Naive thymus-derived CD8-positive, alpha-beta T cell (primary cell): ENCODE measurements at regions of chr19 and their contacts with region 1.

Region 1: DNA sequence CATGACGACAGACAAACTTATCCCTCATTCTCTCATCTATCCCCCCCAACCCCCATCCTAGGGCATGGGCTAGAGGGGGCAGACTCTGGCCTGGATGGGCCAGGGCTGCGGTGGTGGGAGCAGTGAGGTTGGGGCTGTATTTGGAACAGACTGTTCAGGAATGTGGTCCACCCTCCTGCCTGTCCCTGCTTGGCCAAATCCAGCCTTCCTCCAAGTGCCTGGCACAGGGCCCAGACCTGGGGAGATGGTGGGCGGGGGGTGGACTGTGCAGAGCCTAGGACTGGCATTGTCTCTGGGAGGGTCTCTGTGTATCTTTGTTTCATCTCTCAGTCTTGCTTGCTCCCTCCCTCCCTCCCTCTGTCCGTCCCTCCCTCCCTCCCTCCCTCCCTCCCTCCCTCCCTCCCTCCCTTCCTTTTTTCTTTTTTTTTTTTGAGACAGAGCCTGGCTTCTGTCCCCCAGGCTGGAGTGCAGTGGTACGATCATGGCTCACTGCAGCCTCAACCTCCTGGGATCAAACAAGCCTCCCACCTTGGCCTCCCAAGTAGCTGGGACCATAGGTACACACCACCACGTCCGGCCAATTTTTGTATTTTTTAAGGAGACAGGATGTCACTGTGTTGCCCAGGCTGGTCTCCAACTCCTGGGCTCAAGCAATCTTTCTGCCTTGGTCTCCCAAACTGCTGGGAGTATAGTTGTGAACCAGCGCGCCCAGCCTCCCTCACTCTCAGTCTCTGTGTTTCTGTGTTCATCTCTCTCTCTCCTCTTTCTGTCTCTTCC is 14.4 kb downstream of the EGLN2 start:
- DNase-seq: peak in 1 of 10 donors; percentile 49
- ATAC-seq: no peak
- H3K4me3 Mint-ChIP-seq: peak overlapping the region; percentile 1 to 96 (median 92)
- H3K27ac Mint-ChIP-seq: peak overlapping the region in 5 of 10 donors; percentile 54 to 94 (median 77)
- H3K4me1 Mint-ChIP-seq: peaks cover 30 to 52% (median 45%) of the 10 kb centered on the region in 4 donors
- H3K27me3 Mint-ChIP-seq: no peaks in the 10 kb centered on the region

Region 2: DNA sequence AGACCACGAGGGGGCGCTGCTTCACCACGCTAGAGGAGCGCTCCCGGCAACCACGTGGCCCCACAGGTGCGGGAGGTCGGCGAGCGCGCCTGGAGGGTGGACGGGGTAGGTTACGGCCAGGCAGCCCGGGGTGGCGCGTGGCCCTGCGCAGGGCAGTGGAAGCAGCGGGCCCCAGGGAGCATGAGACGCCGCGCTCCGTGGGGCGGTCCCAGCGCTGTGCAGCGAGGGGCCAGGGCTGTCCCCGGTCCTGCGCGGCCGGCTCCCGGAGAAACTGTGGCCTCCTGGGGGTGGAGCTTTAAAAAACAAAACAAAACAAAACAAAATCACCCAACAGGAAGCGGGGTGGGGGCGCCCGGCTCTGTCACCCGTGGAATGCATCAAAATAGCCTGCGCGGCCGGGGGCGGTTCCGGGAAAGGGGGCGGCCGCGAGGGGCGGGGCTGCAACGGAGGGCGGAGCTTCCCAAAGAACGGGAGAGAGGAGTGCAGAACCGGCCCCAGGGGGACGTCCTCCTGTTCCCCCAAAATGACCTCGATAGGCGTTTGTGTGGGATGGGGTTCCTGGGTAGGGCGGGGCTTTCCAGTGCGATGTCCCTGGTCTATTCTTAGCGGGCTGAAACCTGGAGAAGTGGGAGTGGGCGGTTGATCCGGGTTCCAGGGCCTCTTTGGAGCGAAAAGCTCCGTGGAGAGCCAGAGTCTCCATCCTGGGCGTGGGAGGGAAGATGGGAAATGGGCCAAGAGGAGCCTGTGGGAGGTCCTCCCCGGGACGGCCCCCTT is 150.3 kb before region 1 on chr19:
- POLR2A ChIA-PET with region 1: interaction called, 14 read pairs
- DNase-seq: peak; percentile 81 to 98 (median 92)
- ATAC-seq: peak; percentile 91 to 92
- H3K4me3 Mint-ChIP-seq: peak overlapping the region; percentile 76 to 91 (median 84)
- H3K27ac Mint-ChIP-seq: peak overlapping the region; percentile 63 to 93 (median 90)
- H3K4me1 Mint-ChIP-seq: peaks cover 6 to 15% (median 8%) of the 10 kb centered on the region in 4 donors
- H3K27me3 Mint-ChIP-seq: no peaks in the 10 kb centered on the region